ENCODE measurements at regions of chr16 and their contacts with region 1.

Region 1: DNA sequence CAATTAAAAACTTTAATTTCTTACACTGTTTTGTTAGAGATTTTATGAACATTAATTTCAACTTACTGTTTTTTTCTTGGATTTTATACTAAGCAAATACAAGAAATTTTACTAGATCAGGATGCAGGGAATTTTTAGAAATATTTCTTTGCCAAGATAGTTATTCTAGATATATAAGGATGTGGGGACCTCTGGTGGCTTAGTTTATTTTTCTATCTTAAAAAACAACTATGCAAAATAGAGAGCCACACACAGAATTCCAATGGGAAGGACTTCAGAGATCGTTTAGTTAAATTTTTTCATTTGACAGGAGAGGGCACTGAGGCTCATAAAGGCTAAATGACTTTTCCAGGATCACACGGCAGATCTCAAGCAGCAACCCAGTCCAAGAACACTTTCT is 23.0 kb upstream of the CAPNS2 start:
- DNase-seq: no peak
- ATAC-seq: no peak; the same call in 1 of the 2 replicates
- H3K4me3 ChIP-seq: no peak overlapping the region
- H3K27ac ChIP-seq: no peak overlapping the region
- H3K4me1 ChIP-seq: peaks cover 0 to 5% of the 10 kb centered on the region in 2 experiments; a peak in 1 of 4 replicates
- H3K27me3 ChIP-seq: no peaks in the 10 kb centered on the region
- CTCF ChIP-seq: peak in 2 of 3 experiments; percentile 33 to 82; a peak in 4 of 6 replicates
- POLR2A ChIP-seq: no peak
- RAD21 ChIP-seq: peak; percentile 61

Region 2: GRCh38 chr16:55357241-55357640 is 186.2 kb before region 1 on chr16:
- CTCF ChIA-PET with region 1: no interaction called
- POLR2A ChIA-PET with region 1: no interaction called
- RAD21 ChIA-PET with region 1: no interaction called
- intact Hi-C with region 1: no loop called
- DNase-seq: no peak
- ATAC-seq: no peak
- H3K4me3 ChIP-seq: no peak overlapping the region
- H3K27ac ChIP-seq: no peak overlapping the region
- H3K4me1 ChIP-seq: no peaks in the 10 kb centered on the region
- H3K27me3 ChIP-seq: peaks cover 22% of the 10 kb centered on the region
- CTCF ChIP-seq: no peak
- POLR2A ChIP-seq: no peak
- RAD21 ChIP-seq: no peak

Region 3: GRCh38 chr16:55398762-55399161 is 144.7 kb before region 1 on chr16:
- CTCF ChIA-PET with region 1: no interaction called
- POLR2A ChIA-PET with region 1: no interaction called
- RAD21 ChIA-PET with region 1: no interaction called
- intact Hi-C with region 1: no loop called
- DNase-seq: no peak
- ATAC-seq: no peak; the same call in 1 of the 2 replicates
- H3K4me3 ChIP-seq: no peak overlapping the region
- H3K27ac ChIP-seq: no peak overlapping the region
- H3K4me1 ChIP-seq: no peaks in the 10 kb centered on the region
- H3K27me3 ChIP-seq: peaks cover 45% of the 10 kb centered on the region
- CTCF ChIP-seq: no peak
- POLR2A ChIP-seq: no peak
- RAD21 ChIP-seq: no peak

Region 4: DNA sequence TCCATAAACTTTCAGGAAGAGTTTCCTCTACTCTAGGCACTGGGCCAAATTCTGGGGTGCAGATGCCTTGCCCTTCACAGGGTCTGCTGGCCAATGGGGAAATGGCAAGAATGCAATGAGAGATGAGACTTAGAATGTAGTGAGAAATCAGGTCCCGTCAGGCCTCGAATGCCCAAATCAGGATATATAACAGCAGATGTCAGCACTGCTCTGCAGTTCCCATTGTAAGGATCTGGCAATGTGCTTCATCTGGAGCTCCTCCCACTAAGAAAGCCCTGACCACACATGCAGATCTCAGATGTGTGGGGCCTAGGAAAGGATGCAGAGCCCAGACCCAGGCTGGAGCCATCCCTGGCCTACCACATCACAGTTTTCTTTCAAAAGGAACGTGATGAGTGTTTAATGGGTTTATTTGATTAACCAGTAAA is 48.5 kb before region 1 on chr16:
- CTCF ChIA-PET with region 1: interaction called, 7 read pairs
- POLR2A ChIA-PET with region 1: no interaction called
- RAD21 ChIA-PET with region 1: no interaction called
- intact Hi-C with region 1: loop called (anchors 2 kb)
- DNase-seq: no peak
- ATAC-seq: peak; percentile 70
- H3K4me3 ChIP-seq: no peak overlapping the region
- H3K27ac ChIP-seq: no peak overlapping the region
- H3K4me1 ChIP-seq: peaks cover 5 to 9% of the 10 kb centered on the region in 2 experiments
- H3K27me3 ChIP-seq: 0 out of 2 replicates have a peak, but pooled peaks cover 2% of the 10 kb centered on the region
- CTCF ChIP-seq: peak; percentile 5 to 46 (median 25); a peak in 3 of 6 replicates
- POLR2A ChIP-seq: no peak
- RAD21 ChIP-seq: peak; percentile 72

Region 5: DNA sequence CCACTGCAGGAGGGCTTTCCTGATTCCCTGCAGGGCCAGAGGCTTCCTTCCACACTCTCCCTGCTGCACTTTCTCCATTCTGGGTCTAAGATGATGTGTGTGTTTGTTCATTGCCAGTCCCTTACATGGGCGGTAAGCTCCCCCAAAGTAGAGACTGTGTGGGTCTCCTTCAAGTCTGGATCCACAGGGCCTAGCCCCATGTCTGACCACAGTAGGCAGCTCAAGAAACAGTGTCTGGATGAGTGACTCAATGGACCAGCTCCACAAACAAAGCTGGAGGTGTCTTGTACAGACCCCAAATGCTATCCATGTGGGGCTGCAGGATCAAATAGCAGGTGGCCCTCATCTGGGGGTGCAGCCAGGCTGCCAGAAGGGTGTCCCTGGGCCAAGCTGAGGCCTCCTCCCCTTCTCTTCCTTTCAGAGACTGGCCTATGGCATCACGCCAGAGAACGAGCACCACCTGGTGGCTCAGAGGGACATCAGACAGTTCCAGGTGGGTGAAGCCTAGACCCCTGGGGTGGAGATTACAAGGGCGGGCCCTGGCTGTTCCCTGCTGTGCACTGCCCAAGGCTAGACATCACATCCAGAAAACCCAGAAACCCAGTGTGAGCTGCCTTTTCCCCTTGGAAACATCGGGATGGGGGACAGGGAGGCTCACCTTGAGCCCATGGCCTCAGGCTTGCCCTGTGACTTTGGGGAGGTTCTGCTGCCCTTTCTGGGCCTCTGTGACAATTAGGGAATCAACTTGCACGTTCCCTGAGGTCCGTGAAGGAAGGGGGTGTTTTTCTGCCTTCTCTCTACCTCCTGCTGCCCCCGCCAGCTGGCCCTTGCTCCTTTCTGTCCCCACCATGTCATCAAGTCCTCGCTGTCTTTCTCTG is 158.2 kb after region 1 on chr16:
- CTCF ChIA-PET with region 1: interaction called, 7 read pairs
- POLR2A ChIA-PET with region 1: no interaction called
- RAD21 ChIA-PET with region 1: no interaction called
- intact Hi-C with region 1: loop called (anchors 1 kb)
- DNase-seq: peak; percentile 46
- ATAC-seq: peak; percentile 93
- H3K4me3 ChIP-seq: no peak overlapping the region
- H3K27ac ChIP-seq: no peak overlapping the region
- H3K4me1 ChIP-seq: no peaks in the 10 kb centered on the region
- H3K27me3 ChIP-seq: peaks cover 34% of the 10 kb centered on the region
- CTCF ChIP-seq: peak; percentile 79 to 85 (median 82)
- POLR2A ChIP-seq: no peak
- RAD21 ChIP-seq: peak; percentile 73

Region 6: GRCh38 chr16:55711959-55712876 is 168.7 kb after region 1 on chr16:
- CTCF ChIA-PET with region 1: no interaction called
- POLR2A ChIA-PET with region 1: no interaction called
- RAD21 ChIA-PET with region 1: no interaction called
- intact Hi-C with region 1: no loop called
- DNase-seq: peak; percentile 31
- ATAC-seq: peak; percentile 92
- H3K4me3 ChIP-seq: no peak overlapping the region
- H3K27ac ChIP-seq: no peak overlapping the region
- H3K4me1 ChIP-seq: no peaks in the 10 kb centered on the region
- H3K27me3 ChIP-seq: peaks cover 47% of the 10 kb centered on the region
- CTCF ChIP-seq: peak; percentile 47 to 68 (median 54); a peak in 5 of 6 replicates
- POLR2A ChIP-seq: no peak
- RAD21 ChIP-seq: peak; percentile 71

Region 7: GRCh38 chr16:55842369-55843104 is 299.1 kb after region 1 on chr16:
- CTCF ChIA-PET with region 1: no interaction called
- POLR2A ChIA-PET with region 1: no interaction called
- RAD21 ChIA-PET with region 1: no interaction called
- intact Hi-C with region 1: loop called (anchors 5 kb)
- DNase-seq: peak; percentile 18
- ATAC-seq: peak; percentile 76
- H3K4me3 ChIP-seq: no peak overlapping the region
- H3K27ac ChIP-seq: no peak overlapping the region
- H3K4me1 ChIP-seq: no peaks in the 10 kb centered on the region
- H3K27me3 ChIP-seq: peaks cover 24% of the 10 kb centered on the region
- CTCF ChIP-seq: peak; percentile 58 to 75 (median 74); a peak in 5 of 6 replicates
- POLR2A ChIP-seq: no peak
- RAD21 ChIP-seq: peak; percentile 77

Measured in HCT116 (cell line).